Vagina (tissue), 2 donors: ENCODE measurements at regions of chr13 and their contacts with region 1.

Region 1: GRCh38 chr13:75219479-75220237 is 262.3 kb downstream of the TBC1D4 start:
- DNase-seq: no peak
- H3K4me3 ChIP-seq: peak overlapping the region in 1 of 2 donors; percentile 24
- H3K27ac ChIP-seq: no peak overlapping the region
- H3K4me1 ChIP-seq: peaks cover 11% of the 10 kb centered on the region
- H3K27me3 ChIP-seq: no peaks in the 10 kb centered on the region
- CTCF ChIP-seq: peak; percentile 63 to 93 (median 88)
- POLR2A ChIP-seq: no peak

Region 2: GRCh38 chr13:73365240-73365639 is 1854.4 kb before region 1 on chr13:
- intact Hi-C with region 1: no loop called
- DNase-seq: no peak
- H3K4me3 ChIP-seq: no peak overlapping the region
- H3K27ac ChIP-seq: no peak overlapping the region
- H3K4me1 ChIP-seq: peaks cover 27% of the 10 kb centered on the region
- H3K27me3 ChIP-seq: no peaks in the 10 kb centered on the region
- CTCF ChIP-seq: no peak
- POLR2A ChIP-seq: no peak

Region 3: GRCh38 chr13:73754727-73755292 is 1464.8 kb before region 1 on chr13:
- intact Hi-C with region 1: loop called (anchors 10 kb)
- DNase-seq: no peak
- H3K4me3 ChIP-seq: no peak overlapping the region
- H3K27ac ChIP-seq: no peak overlapping the region
- H3K4me1 ChIP-seq: no peaks in the 10 kb centered on the region
- H3K27me3 ChIP-seq: no peaks in the 10 kb centered on the region
- CTCF ChIP-seq: peak; percentile 30 to 60 (median 48)
- POLR2A ChIP-seq: no peak

Region 4: DNA sequence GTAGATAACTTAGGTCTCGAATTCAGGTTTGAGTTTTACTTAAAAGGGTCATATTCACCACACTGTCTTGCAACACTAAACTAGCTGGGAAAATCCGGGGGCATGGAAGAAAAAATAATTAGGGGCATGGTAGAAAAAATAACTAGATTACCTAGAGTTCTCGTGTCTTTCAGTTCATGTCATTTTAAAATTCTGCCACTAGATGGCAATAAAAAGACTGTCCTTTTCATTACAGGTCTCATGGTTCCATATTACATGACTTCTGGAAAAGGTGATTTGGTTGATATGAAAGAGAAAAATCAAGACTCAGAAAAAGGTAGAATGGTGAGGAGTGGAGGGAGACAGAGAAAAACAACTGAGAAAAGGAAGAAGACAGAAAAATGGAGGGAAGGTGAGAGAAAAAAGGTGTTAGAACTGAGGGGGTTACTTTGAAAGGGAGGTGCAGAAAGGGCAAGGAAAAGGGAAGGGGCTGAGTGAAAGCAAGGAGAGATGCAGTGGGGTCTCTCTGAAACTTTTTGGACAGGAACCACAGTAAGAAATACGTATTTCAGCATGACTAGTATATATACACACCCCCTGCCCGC is 1384.4 kb before region 1 on chr13:
- intact Hi-C with region 1: loop called (anchors 10 kb)
- DNase-seq: no peak
- H3K4me3 ChIP-seq: no peak overlapping the region
- H3K27ac ChIP-seq: no peak overlapping the region
- H3K4me1 ChIP-seq: no peaks in the 10 kb centered on the region
- H3K27me3 ChIP-seq: no peaks in the 10 kb centered on the region
- CTCF ChIP-seq: peak in 2 of 3 experiments; percentile 55 to 65
- POLR2A ChIP-seq: no peak